ENCODE measurements at regions of chr10 and their contacts with region 1.

Region 1: GRCh38 chr10:71735709-71736569 is 16.4 kb upstream of the C10orf105 start:
- H3K4me3 Mint-ChIP-seq: peak overlapping the region; percentile 71
- H3K27ac Mint-ChIP-seq: peak overlapping the region; percentile 98
- H3K4me1 Mint-ChIP-seq: peaks cover 96% of the 10 kb centered on the region
- H3K27me3 Mint-ChIP-seq: no peaks in the 10 kb centered on the region

Region 2: DNA sequence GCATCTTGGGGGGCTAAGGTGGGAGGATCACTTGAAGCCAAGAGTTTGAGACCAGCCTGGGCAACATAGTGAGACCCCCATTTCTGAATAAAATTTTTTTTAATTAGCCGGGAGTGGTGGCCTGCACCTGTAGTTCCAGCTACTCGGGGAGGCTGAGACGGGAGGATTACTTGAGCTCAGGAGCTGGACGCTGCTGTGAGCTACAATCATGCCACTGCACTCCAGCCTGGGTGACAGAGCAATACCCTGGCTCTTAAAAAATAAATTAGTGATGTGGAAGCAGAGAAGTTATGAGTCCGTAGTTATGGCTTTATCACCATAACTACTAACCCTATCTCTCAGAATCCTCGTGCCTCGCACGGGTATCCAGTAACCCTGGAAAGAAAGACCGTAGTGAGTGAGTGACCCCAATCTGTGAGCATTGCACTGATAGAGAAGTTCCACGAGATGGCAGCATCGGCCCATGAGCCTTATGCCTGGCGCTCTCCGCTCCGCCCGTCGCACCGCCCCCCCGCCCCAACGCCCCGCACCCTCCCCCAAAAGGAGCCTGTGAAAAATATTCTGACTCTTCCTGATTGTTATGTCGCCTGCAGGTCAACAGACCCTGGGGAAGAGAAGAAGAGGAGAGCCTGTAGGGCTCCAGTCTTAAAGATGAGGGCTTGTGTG is 421.8 kb before region 1 on chr10:
- intact Hi-C with region 1: no loop called
- H3K4me3 Mint-ChIP-seq: peak overlapping the region; percentile 5
- H3K27ac Mint-ChIP-seq: peak overlapping the region; percentile 51
- H3K4me1 Mint-ChIP-seq: peaks cover 71% of the 10 kb centered on the region
- H3K27me3 Mint-ChIP-seq: peaks cover 11% of the 10 kb centered on the region

Region 3: DNA sequence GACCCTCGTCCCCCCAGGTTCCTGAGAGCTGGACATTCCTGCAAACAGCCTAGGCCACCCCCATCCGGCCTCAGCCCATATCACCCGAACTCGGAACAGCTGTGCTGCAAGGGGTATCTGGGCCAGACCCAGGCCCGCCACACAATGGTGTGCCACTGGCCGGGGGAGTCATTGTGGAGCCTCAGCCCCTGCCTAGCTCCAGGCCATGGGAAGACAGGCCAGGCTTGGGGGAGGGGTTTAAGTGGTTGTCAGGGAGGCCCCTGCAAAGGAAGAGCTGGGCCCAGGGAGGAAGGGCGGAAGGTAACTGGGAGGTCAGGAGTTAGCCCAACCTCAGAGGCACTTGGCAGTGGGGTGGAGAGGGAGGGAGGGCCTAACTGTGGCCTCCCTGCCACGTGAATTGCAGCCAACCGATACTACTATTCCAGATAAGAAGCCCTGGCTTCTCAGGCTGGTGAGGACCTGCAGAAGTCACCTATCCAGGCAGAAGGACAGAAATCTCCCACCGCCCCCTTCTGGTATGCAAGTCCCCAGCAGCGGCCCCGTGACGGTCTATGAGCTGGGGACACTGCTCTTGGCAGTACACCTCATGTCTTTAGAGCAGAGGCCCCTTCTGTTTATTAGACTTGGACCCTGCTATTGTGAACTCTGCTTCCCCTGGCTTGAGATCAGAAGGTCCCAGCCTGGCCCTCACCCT is 10.6 kb after region 1 on chr10:
- intact Hi-C with region 1: loop called (anchors 1 kb)
- H3K4me3 Mint-ChIP-seq: no peak overlapping the region
- H3K27ac Mint-ChIP-seq: peak overlapping the region; percentile 88
- H3K4me1 Mint-ChIP-seq: peaks cover 100% of the 10 kb centered on the region
- H3K27me3 Mint-ChIP-seq: no peaks in the 10 kb centered on the region

Region 4: DNA sequence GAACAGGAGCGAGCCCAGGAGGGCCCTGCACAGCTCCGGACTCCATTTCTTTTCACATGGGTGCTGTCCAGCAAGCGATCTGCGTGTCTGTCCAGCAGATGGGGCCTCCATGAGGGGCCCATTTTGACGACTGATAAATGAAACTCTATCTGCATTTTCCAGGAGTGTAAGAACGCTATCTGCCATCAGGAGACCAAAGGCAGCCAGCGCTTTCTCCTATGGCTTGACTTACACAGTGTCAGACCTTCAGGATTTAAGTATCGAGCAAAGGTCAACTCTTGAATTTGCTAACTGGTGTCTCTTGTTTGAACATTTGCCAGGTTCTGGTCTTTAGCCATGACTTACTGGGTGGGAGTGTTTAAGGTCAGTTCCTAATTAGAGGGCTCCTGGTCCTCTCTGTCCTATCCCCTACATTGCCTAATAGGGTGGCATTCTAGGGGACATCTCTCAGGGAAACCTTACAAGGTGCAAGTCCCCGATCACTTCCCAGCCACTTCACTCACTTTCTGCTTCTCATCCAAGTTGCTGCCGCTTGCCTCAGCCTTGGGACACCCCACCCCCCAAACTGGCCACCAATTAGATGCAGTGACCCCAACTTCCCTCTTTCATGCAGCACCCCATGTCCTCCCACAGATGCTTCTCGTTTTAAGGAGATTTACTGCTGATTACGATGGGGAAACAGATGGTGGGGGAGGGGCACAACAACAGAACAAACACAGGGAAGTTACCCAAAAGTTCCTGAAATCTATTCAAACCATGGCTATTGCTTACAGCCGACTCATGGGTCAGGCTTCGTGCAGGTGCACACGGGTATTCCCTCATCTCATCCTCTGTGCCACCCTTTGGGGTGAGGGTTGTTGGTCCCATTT is 17.4 kb after region 1 on chr10:
- intact Hi-C with region 1: loop called (anchors 2 kb)
- H3K4me3 Mint-ChIP-seq: peak overlapping the region; percentile 21
- H3K27ac Mint-ChIP-seq: peak overlapping the region; percentile 88
- H3K4me1 Mint-ChIP-seq: peaks cover 100% of the 10 kb centered on the region
- H3K27me3 Mint-ChIP-seq: no peaks in the 10 kb centered on the region